PC-3 (cell line): ENCODE measurements at regions of chr11 and their contacts with region 1.

Region 1: GRCh38 chr11:77994412-77995362 is at the start of gene INTS4:
- DNase-seq: peak; percentile 100
- ATAC-seq: peak; percentile 98
- H3K4me3 ChIP-seq: peak within 1 kb of the TSS; percentile 80
- H3K27ac ChIP-seq: peak within 1 kb of the TSS; percentile 54
- H3K4me1 ChIP-seq: peaks cover 15% of the 10 kb centered on the region
- H3K27me3 ChIP-seq: no peaks in the 10 kb centered on the region
- CTCF ChIP-seq: no peak
- total RNA-seq, gene INTS4: 42.2 and 50.8 TPM in 2 replicates

Region 2: GRCh38 chr11:77525452-77526091 is 469.1 kb before region 1 on chr11:
- CTCF ChIA-PET with region 1: no interaction called
- POLR2A ChIA-PET with region 1: no interaction called
- intact Hi-C with region 1: no loop called
- DNase-seq: no peak
- ATAC-seq: no peak
- H3K4me3 ChIP-seq: no peak overlapping the region
- H3K27ac ChIP-seq: no peak overlapping the region
- H3K4me1 ChIP-seq: no peaks in the 10 kb centered on the region
- H3K27me3 ChIP-seq: no peaks in the 10 kb centered on the region
- CTCF ChIP-seq: no peak

Region 3: GRCh38 chr11:77637345-77638165 is 357.1 kb before region 1 on chr11 and contains the start of gene CLNS1A:
- CTCF ChIA-PET with region 1: interaction called, 3 read pairs
- POLR2A ChIA-PET with region 1: no interaction called
- intact Hi-C with region 1: loop called (anchors 1 kb)
- DNase-seq: peak; percentile 93
- ATAC-seq: peak; percentile 99
- H3K4me3 ChIP-seq: peak within 1 kb of the TSS; percentile 85
- H3K27ac ChIP-seq: peak within 1 kb of the TSS; percentile 64
- H3K4me1 ChIP-seq: peaks cover 19% of the 10 kb centered on the region
- H3K27me3 ChIP-seq: no peaks in the 10 kb centered on the region
- CTCF ChIP-seq: no peak
- total RNA-seq, gene CLNS1A: 302 and 361 TPM in 2 replicates

Region 4: GRCh38 chr11:77820563-77821348 is 173.9 kb before region 1 on chr11 and contains the starts of genes AAMDC and RSF1:
- CTCF ChIA-PET with region 1: no interaction called
- POLR2A ChIA-PET with region 1: no interaction called
- intact Hi-C with region 1: loop called (anchors 1 kb)
- DNase-seq: peak; percentile 98
- ATAC-seq: peak; percentile 80
- H3K4me3 ChIP-seq: peak within 1 kb of the TSS; percentile 97
- H3K27ac ChIP-seq: peak within 1 kb of the TSS; percentile 34
- H3K4me1 ChIP-seq: peaks cover 17% of the 10 kb centered on the region; the same call in 1 of the 2 replicates
- H3K27me3 ChIP-seq: no peaks in the 10 kb centered on the region
- CTCF ChIP-seq: peak; percentile 61
- total RNA-seq, gene AAMDC: 14.4 and 18.0 TPM in 2 replicates
- total RNA-seq, gene RSF1: 30.0 and 58.7 TPM in 2 replicates

Region 5: DNA sequence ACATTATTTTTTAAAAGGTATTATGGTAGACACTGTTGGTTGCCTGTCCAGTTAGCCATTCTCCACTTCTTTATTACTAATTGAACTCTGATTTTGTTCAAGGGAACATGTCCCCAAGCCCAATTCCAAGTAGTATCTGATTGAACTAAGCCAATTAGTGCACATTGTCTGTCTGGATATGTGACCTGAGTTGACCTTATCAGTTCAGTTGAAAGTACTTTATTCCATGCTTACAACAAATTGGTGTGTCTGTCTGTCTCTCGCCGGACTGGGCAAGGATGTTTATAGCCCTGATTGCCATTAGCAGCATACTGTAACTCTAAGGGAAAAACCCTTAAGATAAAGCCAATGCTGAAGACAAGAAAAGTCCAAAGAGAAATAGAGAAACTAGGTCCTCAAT is 85.9 kb before region 1 on chr11:
- CTCF ChIA-PET with region 1: no interaction called
- POLR2A ChIA-PET with region 1: interaction called, 7 read pairs
- intact Hi-C with region 1: loop called (anchors 10 kb)
- DNase-seq: no peak
- ATAC-seq: no peak
- H3K4me3 ChIP-seq: no peak overlapping the region
- H3K27ac ChIP-seq: no peak overlapping the region
- H3K4me1 ChIP-seq: peaks cover 4% of the 10 kb centered on the region
- H3K27me3 ChIP-seq: no peaks in the 10 kb centered on the region
- CTCF ChIP-seq: no peak

Region 6: DNA sequence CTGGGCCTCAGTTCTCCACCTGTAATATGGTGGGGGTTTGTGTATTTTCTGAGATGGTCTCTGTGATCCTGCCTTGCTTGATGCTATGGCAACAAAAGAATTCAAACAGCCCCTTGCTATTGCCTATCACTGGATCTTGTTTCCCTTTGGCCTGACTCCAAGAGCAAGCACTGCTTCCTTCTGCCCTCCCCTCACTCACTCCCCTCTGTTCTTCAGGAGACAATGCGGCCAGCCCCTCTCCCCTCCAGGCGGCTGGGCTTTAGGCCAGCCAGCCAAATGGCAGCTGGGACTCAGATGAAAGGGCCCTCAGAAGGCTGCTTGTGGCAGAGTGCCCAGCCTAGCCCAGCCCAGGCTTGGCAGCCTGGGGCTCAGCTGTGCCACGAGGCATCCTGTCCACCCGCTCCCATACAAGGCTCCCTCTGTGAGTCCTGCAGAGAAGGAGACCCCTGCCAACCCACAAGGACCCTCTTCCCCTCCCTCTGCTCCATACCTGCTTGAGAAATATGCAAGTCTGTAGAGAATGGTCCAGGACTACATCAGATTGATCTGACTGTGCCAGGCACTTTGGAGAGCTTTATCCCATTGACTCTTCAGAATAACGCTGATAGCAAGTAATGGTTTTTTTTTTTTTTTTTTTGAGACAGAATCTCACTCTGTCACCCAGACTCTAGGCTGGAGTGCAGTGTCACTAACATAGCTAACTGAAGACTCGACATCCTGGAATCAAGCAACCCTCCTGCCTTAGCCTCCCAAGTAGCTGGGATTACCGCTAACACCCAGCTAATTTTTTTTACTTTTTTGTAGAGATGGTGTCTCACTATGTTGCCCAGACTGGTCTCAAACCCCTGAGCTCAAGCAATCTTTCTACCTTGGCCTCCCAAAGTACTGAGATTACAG is 36.0 kb after region 1 on chr11:
- CTCF ChIA-PET with region 1: no interaction called
- POLR2A ChIA-PET with region 1: interaction called, 12 read pairs
- intact Hi-C with region 1: no loop called
- DNase-seq: peak; percentile 85
- ATAC-seq: peak; percentile 78
- H3K4me3 ChIP-seq: no peak overlapping the region
- H3K27ac ChIP-seq: no peak overlapping the region
- H3K4me1 ChIP-seq: peaks cover 29% of the 10 kb centered on the region
- H3K27me3 ChIP-seq: no peaks in the 10 kb centered on the region
- CTCF ChIP-seq: no peak

Region 7: DNA sequence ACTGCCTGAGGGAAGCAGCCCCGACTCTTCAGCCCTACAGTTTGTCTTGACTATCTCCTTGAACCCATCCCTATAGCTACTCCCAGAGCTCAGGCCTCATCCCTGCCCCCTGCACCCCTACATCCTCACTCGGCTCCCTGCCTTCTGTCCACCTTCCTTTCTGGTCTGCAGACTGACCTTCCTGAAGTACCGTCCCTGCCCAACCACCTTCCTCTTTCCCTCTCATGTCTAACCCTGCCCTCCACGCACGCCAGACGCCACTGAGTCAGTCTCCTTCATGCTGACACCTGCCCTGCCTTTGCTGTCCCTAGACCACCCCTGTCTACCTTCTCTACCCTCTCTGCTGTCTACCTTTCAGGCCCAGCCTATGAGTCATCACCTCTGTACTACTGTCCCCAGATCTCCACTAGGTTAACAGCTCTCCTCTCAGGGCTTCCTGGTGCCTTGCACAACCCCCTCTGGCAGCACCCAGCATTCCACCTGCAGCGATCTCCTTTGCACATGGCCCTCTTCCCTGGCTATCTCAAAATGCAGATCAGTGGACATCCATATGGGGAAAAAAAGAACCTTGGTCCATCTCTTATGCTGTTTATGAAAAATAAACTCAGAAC is 184.9 kb after region 1 on chr11:
- CTCF ChIA-PET with region 1: no interaction called
- POLR2A ChIA-PET with region 1: no interaction called
- intact Hi-C with region 1: no loop called
- DNase-seq: peak; percentile 25
- ATAC-seq: no peak; the same call in 1 of the 2 replicates
- H3K4me3 ChIP-seq: no peak overlapping the region
- H3K27ac ChIP-seq: no peak overlapping the region
- H3K4me1 ChIP-seq: no peaks in the 10 kb centered on the region
- H3K27me3 ChIP-seq: no peaks in the 10 kb centered on the region
- CTCF ChIP-seq: no peak